CD4-positive, alpha-beta memory T cell (primary cell): ENCODE measurements at regions of chr19 and their contacts with region 1.

Region 1: GRCh38 chr19:42108527-42109389 is 23.5 kb downstream of the POU2F2 start:
- DNase-seq: peak; percentile 83 to 86 (median 85)
- H3K4me3 ChIP-seq: no peak overlapping the region
- H3K4me3 Mint-ChIP-seq: no peak overlapping the region
- H3K27ac ChIP-seq: no peak overlapping the region
- H3K27ac Mint-ChIP-seq: peak overlapping the region; percentile 38 to 87 (median 65)
- H3K4me1 ChIP-seq: peaks cover 6% of the 10 kb centered on the region
- H3K4me1 Mint-ChIP-seq: peaks cover 5 to 11% (median 9%) of the 10 kb centered on the region in 4 donors
- H3K27me3 ChIP-seq: no peaks in the 10 kb centered on the region
- H3K27me3 Mint-ChIP-seq: no peaks in the 10 kb centered on the region

Region 2: GRCh38 chr19:41872775-41873647 is 235.7 kb before region 1 on chr19:
- CTCF ChIA-PET with region 1: no interaction called
- POLR2A ChIA-PET with region 1: no interaction called
- intact Hi-C with region 1: no loop called
- DNase-seq: peak; percentile 59 to 70 (median 63)
- H3K4me3 ChIP-seq: no peak overlapping the region
- H3K4me3 Mint-ChIP-seq: peak overlapping the region; percentile 26 to 85 (median 68)
- H3K27ac ChIP-seq: peak overlapping the region; percentile 66
- H3K27ac Mint-ChIP-seq: peak overlapping the region; percentile 92 to 99 (median 95)
- H3K4me1 ChIP-seq: peaks cover 98% of the 10 kb centered on the region
- H3K4me1 Mint-ChIP-seq: peaks cover 45 to 97% (median 68%) of the 10 kb centered on the region in 4 donors
- H3K27me3 ChIP-seq: no peaks in the 10 kb centered on the region
- H3K27me3 Mint-ChIP-seq: no peaks in the 10 kb centered on the region

Region 3: DNA sequence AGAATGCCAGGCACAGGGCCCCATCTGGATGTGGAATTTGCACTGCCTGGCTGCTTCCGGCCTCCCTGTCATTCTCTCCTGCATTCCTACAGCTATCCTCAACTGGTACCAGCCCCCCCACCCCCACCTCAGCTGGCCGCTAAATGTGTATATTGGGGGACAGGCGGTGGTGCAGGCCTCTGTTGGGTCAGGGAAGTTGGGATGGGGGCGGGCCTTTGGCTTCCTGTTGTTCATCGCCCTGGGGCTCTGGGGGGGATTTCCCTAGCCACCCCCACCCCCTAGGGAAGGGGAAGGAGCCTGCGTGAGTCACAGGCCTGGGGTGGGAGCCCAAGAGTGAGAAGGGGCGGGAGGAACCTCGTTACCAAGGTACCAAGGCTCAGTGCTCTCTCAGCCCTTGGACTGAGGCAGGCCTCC is 12.9 kb after region 1 on chr19:
- CTCF ChIA-PET with region 1: interaction called, 53 read pairs
- POLR2A ChIA-PET with region 1: interaction called, 17 read pairs
- intact Hi-C with region 1: no loop called
- DNase-seq: peak; percentile 50 to 91 (median 52)
- H3K4me3 ChIP-seq: peak overlapping the region in 1 of 2 donors; percentile 41
- H3K4me3 Mint-ChIP-seq: peak overlapping the region; percentile 55 to 89 (median 75)
- H3K27ac ChIP-seq: peak overlapping the region; percentile 83
- H3K27ac Mint-ChIP-seq: peak overlapping the region; percentile 88 to 99 (median 96)
- H3K4me1 ChIP-seq: peaks cover 52% of the 10 kb centered on the region
- H3K4me1 Mint-ChIP-seq: peaks cover 38 to 66% (median 51%) of the 10 kb centered on the region in 4 donors
- H3K27me3 ChIP-seq: no peaks in the 10 kb centered on the region
- H3K27me3 Mint-ChIP-seq: no peaks in the 10 kb centered on the region

Region 4: DNA sequence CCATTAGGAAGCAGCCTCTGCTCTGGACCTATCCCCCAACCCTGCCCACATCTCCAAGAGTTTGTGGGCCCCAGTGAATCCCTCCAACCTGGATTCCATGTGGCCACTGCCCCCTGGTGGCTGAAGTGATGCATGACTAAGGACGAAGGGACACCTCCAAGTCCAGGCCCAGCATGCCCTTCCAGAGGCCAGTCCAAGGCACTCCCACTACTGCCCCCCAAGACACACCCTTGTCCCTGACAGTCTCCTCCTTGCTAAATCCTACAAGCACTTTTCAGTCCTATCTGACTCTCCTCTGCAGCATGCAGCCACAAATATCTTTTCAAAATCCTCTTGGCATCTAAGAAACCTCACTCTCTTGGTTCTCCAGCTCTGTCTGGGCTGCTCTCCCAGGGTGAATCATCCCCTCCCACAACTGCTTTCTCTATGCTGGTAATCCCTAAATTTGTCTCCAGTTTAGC is 75.7 kb after region 1 on chr19:
- CTCF ChIA-PET with region 1: interaction called, 81 read pairs
- POLR2A ChIA-PET with region 1: interaction called, 4 read pairs
- intact Hi-C with region 1: loop called (anchors 1 kb)
- DNase-seq: peak; percentile 44 to 63 (median 58)
- H3K4me3 ChIP-seq: no peak overlapping the region
- H3K4me3 Mint-ChIP-seq: peak overlapping the region in 6 of 8 donors; percentile 0 to 79 (median 36)
- H3K27ac ChIP-seq: peak overlapping the region; percentile 10
- H3K27ac Mint-ChIP-seq: peak overlapping the region; percentile 40 to 94 (median 79)
- H3K4me1 ChIP-seq: peaks cover 44% of the 10 kb centered on the region
- H3K4me1 Mint-ChIP-seq: peaks cover 38 to 67% (median 55%) of the 10 kb centered on the region in 4 donors
- H3K27me3 ChIP-seq: no peaks in the 10 kb centered on the region
- H3K27me3 Mint-ChIP-seq: no peaks in the 10 kb centered on the region

Region 5: GRCh38 chr19:42244347-42245220 is 135.8 kb after region 1 on chr19:
- CTCF ChIA-PET with region 1: interaction called, 6 read pairs
- POLR2A ChIA-PET with region 1: no interaction called
- intact Hi-C with region 1: loop called (anchors 1 kb)
- DNase-seq: peak; percentile 89 to 95 (median 91)
- H3K4me3 ChIP-seq: peak overlapping the region; percentile 53 to 89
- H3K4me3 Mint-ChIP-seq: peak overlapping the region; percentile 94 to 99 (median 97)
- H3K27ac ChIP-seq: peak overlapping the region; percentile 89
- H3K27ac Mint-ChIP-seq: peak overlapping the region; percentile 77 to 99 (median 99)
- H3K4me1 ChIP-seq: peaks cover 47% of the 10 kb centered on the region
- H3K4me1 Mint-ChIP-seq: peaks cover 26 to 62% (median 44%) of the 10 kb centered on the region in 4 donors
- H3K27me3 ChIP-seq: no peaks in the 10 kb centered on the region
- H3K27me3 Mint-ChIP-seq: no peaks in the 10 kb centered on the region

Region 6: GRCh38 chr19:42295831-42296525 is 187.2 kb after region 1 on chr19:
- CTCF ChIA-PET with region 1: interaction called, 22 read pairs
- POLR2A ChIA-PET with region 1: interaction called, 4 read pairs
- intact Hi-C with region 1: loop called (anchors 1 kb)
- DNase-seq: peak; percentile 78 to 89 (median 85)
- H3K4me3 ChIP-seq: no peak overlapping the region
- H3K4me3 Mint-ChIP-seq: peak overlapping the region in 1 of 8 donors; percentile 25
- H3K27ac ChIP-seq: peak overlapping the region; percentile 11
- H3K27ac Mint-ChIP-seq: peak overlapping the region in 6 of 7 donors; percentile 17 to 79 (median 73)
- H3K4me1 ChIP-seq: peaks cover 8% of the 10 kb centered on the region
- H3K4me1 Mint-ChIP-seq: peaks cover 3 to 22% (median 12%) of the 10 kb centered on the region in 4 donors
- H3K27me3 ChIP-seq: no peaks in the 10 kb centered on the region
- H3K27me3 Mint-ChIP-seq: no peaks in the 10 kb centered on the region

Region 7: GRCh38 chr19:42433503-42434260 is 324.9 kb after region 1 on chr19:
- CTCF ChIA-PET with region 1: interaction called, 10 read pairs
- POLR2A ChIA-PET with region 1: interaction called, 3 read pairs
- intact Hi-C with region 1: loop called (anchors 1 kb)
- DNase-seq: peak; percentile 58 to 70 (median 62)
- H3K4me3 ChIP-seq: no peak overlapping the region
- H3K4me3 Mint-ChIP-seq: no peak overlapping the region
- H3K27ac ChIP-seq: no peak overlapping the region
- H3K27ac Mint-ChIP-seq: peak overlapping the region in 3 of 7 donors; percentile 35 to 57 (median 42)
- H3K4me1 ChIP-seq: peaks cover 3% of the 10 kb centered on the region
- H3K4me1 Mint-ChIP-seq: peaks cover 3 to 6% (median 5%) of the 10 kb centered on the region in 4 donors
- H3K27me3 ChIP-seq: no peaks in the 10 kb centered on the region
- H3K27me3 Mint-ChIP-seq: no peaks in the 10 kb centered on the region